Dorsolateral prefrontal cortex (tissue), 120 donors: ENCODE measurements at regions of chr19 and their contacts with region 1.

Region 1: GRCh38 chr19:56393119-56394012 is at the start of gene ZNF582:
- DNase-seq: peak; percentile 89 to 97 (median 95)
- H3K4me3 ChIP-seq: peak within 1 kb of the TSS; percentile 63 to 99 (median 84)
- H3K27ac ChIP-seq: peak within 1 kb of the TSS; percentile 89 to 100 (median 98)
- H3K27me3 ChIP-seq: no peaks in the 10 kb centered on the region
- CTCF ChIP-seq: peak; percentile 62 to 97 (median 85)
- total RNA-seq, gene ZNF582: 5.1 to 16.3 (median 9.0) TPM

Region 2: DNA sequence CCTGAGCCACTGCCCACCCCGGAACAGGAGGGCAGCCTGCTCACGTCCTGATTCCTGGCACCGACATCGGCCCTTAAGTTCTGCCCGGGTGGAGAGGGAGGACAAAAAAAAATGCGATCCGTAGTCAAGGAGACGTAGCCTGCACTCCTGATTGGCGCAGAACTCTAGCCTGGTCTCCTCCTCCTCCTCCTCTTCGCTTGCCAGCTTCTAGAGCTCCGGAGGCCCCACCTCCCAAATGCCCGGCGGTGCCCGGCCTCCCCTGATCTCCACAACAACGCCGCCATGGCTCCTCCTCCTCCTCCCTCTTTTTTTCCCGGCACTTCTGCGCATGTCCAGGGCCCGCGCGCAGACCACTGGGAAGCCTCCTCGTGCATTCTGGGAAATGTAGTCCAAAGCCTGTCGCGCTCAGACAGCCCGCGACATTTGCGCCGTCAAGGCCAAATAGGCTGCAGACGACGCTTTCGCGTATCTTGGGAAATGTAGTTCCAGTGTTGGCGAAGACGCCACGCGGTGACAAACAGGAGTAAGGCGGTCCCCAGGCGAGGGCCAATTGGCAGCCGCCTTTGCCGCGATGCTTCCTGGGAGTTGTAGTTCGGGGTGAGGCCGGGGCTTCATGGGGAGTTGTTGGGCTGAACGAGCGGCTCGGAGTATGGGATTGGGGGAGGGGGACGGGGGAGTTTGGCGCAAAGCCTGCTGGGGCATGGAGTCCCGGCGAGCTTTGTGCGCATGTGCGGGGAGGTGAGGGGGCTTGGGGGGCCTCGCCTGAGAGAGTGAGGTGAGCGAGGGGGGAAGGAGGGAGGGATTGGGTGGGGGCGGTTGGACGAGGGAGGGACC is 252.6 kb before region 1 on chr19 and contains the start of gene ZNF444:
- intact Hi-C with region 1: loop called in 1 of 2 experiments (anchors 2 kb)
- DNase-seq: peak; percentile 97 to 100 (median 99)
- H3K4me3 ChIP-seq: peak within 1 kb of the TSS; percentile 42 to 98 (median 75)
- H3K27ac ChIP-seq: peak within 1 kb of the TSS; percentile 58 to 96 (median 89)
- H3K27me3 ChIP-seq: no peaks in the 10 kb centered on the region
- CTCF ChIP-seq: peak in 13 of 56 donors; percentile 3 to 32 (median 15)
- total RNA-seq, gene ZNF444: 35.5 to 110 (median 56.7) TPM

Region 3: DNA sequence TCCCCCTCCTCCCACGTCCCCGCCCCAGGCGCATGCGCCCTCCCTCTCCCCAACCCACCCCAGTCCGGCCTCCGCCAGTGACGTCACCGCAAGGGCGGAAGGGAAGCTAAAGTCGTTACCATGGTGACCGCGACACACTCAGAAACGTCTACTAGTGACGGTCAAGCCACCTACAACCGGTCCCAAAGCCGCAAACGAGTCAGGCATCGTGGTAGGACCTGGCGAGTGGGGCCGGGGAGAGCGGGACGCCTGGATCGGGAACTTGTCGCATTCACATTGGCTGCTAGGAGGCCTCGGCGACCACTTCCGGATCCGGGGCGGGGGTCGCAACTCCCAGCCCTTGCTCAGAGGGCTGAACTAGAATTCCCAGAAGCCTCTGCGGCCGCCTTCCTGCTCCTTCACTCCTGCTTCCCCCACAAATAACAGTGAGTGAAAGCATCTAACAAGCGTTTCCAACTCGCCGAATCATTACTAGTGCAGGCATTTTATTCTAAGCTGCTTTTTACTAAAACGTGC is 78.7 kb before region 1 on chr19 and contains the start of gene ZSCAN5A:
- intact Hi-C with region 1: loop called (anchors 2 to 5 kb)
- DNase-seq: peak; percentile 96 to 98 (median 98)
- H3K4me3 ChIP-seq: peak within 1 kb of the TSS; percentile 57 to 97 (median 82)
- H3K27ac ChIP-seq: peak within 1 kb of the TSS; percentile 84 to 100 (median 98)
- H3K27me3 ChIP-seq: no peaks in the 10 kb centered on the region
- CTCF ChIP-seq: peak in 2 of 56 donors; percentile 14 to 18
- total RNA-seq, gene ZSCAN5A: 9.6 to 36.8 (median 16.9) TPM

Region 4: DNA sequence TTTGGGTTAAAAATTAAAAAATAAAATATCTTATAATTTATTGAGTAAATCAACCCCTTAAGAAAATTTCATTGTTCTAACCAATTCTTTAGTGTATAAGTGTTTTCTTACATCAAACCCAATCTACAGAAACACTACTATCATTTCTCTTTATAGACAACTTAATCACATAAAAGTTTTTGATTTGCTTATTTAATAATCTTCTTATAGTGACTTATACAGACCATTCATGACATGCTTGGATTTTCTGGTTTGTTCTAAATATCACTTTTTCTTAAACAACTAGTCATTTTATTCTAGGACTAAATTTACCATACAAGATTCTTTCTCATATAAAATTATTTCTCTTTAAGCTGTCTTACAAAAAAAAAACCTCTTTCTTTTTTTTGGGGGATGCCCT is 51.4 kb before region 1 on chr19:
- intact Hi-C with region 1: no loop called
- DNase-seq: no peak
- H3K4me3 ChIP-seq: no peak overlapping the region
- H3K27ac ChIP-seq: no peak overlapping the region
- H3K27me3 ChIP-seq: no peaks in the 10 kb centered on the region
- CTCF ChIP-seq: no peak

Region 5: GRCh38 chr19:56403764-56404704 is 10.7 kb after region 1 on chr19 and contains the start of gene ZNF583:
- intact Hi-C with region 1: loop called (anchors 1 kb)
- DNase-seq: peak; percentile 90 to 95 (median 94)
- H3K4me3 ChIP-seq: peak within 1 kb of the TSS; percentile 61 to 99 (median 87)
- H3K27ac ChIP-seq: peak within 1 kb of the TSS; percentile 92 to 100 (median 99)
- H3K27me3 ChIP-seq: no peaks in the 10 kb centered on the region
- CTCF ChIP-seq: peak in 28 of 56 donors; percentile 3 to 54 (median 24)
- total RNA-seq, gene ZNF583: 10.0 to 26.2 (median 16.7) TPM

Region 6: DNA sequence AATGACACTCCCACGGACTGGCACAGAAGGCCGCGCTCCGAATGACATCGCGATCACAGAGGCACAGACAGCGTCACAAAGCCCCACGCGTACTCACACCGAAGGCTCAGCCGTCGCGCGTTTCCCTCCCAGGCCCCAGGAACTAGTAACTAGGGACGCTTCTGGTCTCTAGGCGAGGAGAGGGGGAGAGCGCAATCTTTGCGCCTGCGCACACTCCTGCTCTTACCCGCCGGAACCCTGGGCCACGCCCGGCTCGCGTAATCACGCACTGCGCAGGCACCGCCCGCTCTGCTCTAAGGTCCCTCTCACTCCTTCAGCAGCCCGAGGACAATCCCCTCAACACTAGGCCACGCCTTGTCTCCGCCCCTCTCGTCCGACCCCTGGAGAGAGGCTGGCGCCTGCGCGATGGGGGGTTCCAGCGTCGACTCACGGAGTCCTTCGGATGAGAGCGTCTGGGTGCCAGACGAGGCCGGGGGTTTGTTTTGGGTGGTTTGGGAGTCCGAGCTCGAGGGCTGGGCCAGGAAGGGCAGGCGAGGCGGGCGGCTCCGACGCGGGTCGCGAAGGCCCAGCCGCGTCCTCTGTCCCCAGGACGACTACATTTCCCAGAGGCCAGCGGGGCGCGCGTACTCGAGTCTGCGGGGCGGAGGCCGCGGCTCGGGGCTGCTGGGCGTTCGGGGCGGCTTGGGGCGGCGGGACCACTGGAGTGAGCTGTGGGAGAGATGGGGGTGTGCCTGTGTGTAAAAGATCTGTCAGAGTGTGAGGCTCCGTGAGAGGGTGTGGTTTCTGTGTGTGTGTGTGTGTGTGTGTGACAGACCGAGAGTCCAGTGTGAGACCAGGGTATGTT is 114.3 kb after region 1 on chr19 and contains the start of gene ZNF471:
- intact Hi-C with region 1: loop called in 1 of 2 experiments (anchors 1 kb)
- DNase-seq: peak; percentile 98 to 100 (median 99)
- H3K4me3 ChIP-seq: peak within 1 kb of the TSS; percentile 54 to 96 (median 80)
- H3K27ac ChIP-seq: peak within 1 kb of the TSS; percentile 87 to 99 (median 97)
- H3K27me3 ChIP-seq: no peaks in the 10 kb centered on the region
- CTCF ChIP-seq: peak in 14 of 56 donors; percentile 8 to 43 (median 15)
- total RNA-seq, gene ZNF471: 17.4 to 50.0 (median 29.5) TPM

Region 7: DNA sequence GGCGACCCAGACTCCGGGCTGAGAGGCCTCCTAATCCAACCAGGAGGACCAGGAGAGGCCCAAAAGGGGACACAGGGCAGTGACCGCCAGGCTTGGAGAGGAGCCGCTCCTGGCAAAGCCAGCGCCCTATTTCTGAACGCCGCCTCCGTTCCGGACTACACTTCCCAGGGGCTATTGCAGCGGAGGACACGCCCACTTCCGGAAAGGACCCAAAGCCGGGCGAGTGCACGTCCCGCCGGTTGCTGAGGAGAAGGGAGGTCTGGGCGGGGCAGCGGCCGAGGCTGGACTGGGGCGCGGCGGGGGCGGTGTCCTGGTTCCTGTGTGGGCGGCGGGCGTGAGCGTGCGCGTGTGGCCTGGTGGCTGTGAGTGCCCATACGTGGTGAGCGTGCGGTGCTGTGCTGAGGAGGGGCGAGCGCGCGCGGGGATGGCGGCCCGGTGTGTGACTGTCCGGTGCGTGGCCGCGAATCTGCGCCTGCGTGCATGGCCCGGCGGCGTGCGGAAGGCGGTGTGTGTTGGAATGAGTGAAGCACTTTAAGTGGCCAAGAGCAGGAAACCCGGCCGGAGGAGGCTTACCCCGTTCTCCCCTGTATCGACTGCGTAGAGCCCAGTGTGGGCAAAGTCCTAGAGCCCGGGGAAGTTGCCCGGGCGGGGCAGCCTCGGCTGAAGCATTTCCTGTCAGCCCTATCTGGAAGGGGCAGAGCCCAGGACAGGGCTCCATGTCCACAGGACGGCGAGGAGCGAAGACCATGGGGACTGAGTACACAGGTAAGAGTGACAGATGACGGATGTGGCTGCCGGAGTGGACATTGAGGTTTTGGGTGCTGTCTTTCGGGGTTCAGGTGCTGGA is 174.1 kb after region 1 on chr19 and contains the start of gene ZNF470:
- intact Hi-C with region 1: loop called in 1 of 2 experiments (anchors 10 kb)
- DNase-seq: peak; percentile 89 to 96 (median 93)
- H3K4me3 ChIP-seq: peak within 1 kb of the TSS; percentile 70 to 99 (median 91)
- H3K27ac ChIP-seq: peak within 1 kb of the TSS in 58 of 59 donors; percentile 3 to 92 (median 83)
- H3K27me3 ChIP-seq: no peaks in the 10 kb centered on the region
- CTCF ChIP-seq: peak in 15 of 56 donors; percentile 2 to 47 (median 22)
- total RNA-seq, gene ZNF470: 8.3 to 24.8 (median 15.1) TPM